H1 (cell line): ENCODE measurements at regions of chr5 and their contacts with region 1.

Region 1: DNA sequence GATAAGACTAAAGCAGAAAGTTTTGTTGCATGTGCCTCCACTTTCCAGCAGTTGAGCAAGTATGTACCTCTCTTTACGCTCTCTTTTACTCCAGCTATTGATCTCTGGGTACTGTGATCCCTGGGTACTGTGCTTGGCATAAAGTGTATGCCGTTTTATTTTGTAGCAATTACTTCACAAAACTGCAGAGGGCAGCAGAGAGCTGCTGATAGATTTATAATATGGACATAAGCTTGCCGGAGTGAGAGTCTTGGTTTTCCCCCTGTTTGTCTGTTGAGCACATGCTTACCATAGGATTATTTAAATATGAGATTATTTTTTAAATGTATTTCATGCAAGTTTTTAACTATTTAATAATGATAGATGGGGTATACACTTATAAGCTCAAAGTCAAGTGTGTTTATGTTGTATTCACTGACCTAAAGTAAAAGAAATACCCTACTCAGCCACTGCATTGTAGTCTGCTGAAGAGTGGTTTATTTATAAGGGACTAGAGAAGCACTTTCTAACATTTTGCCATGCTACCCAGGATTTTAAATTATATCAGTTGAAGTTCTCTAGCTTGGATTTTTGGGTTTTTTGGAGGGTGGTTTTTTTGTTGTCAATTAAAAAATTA is 13.0 kb downstream of the TTC1 start:
- DNase-seq: peak in 1 of 2 experiments; percentile 57
- H3K4me3 ChIP-seq: no peak overlapping the region
- H3K27ac ChIP-seq: no peak overlapping the region
- H3K4me1 ChIP-seq: no peaks in the 10 kb centered on the region
- H3K27me3 ChIP-seq: no peaks in the 10 kb centered on the region
- CTCF ChIP-seq: peak in 2 of 3 experiments; percentile 72 to 75; a peak in 3 of 4 replicates
- EP300 ChIP-seq: no peak
- POLR2A ChIP-seq: no peak
- RAD21 ChIP-seq: peak; percentile 83 to 90

Region 2: GRCh38 chr5:160008877-160009590 is 12.9 kb before region 1 on chr5 and contains the start of gene TTC1:
- CTCF ChIA-PET with region 1: interaction called, 20 read pairs
- POLR2A ChIA-PET with region 1: interaction called, 6 read pairs
- DNase-seq: peak; percentile 87 to 90
- H3K4me3 ChIP-seq: peak within 1 kb of the TSS; percentile 82 to 100 (median 98)
- H3K27ac ChIP-seq: peak within 1 kb of the TSS; percentile 93
- H3K4me1 ChIP-seq: peaks cover 0 to 4% (median 0%) of the 10 kb centered on the region in 4 experiments; a peak in 2 of 7 replicates
- H3K27me3 ChIP-seq: no peaks in the 10 kb centered on the region
- CTCF ChIP-seq: no peak
- EP300 ChIP-seq: no peak
- POLR2A ChIP-seq: peak; percentile 91 to 98
- RAD21 ChIP-seq: no peak
- total RNA-seq, gene TTC1: 63.9 TPM in 2 replicates

Region 3: DNA sequence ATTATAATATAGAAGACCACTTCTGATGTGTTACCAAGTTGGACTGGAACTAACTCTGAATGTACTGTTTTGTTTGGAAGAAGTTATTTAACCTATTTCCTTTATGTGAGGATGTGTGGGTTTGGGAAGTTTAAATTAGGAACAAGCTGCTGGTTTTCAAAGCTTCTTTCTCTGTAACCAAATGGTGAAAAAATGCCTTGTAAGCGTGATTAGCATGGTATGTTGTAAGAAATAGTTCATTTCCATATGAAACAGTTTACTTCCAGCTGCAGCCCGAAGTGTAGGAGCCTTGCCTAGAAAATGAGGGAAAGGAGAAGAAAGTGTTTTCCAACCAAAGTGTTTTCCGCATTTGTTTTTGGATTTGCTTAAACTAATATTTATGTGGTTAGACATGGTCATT is 23.0 kb after region 1 on chr5:
- CTCF ChIA-PET with region 1: interaction called, 12 read pairs
- POLR2A ChIA-PET with region 1: no interaction called
- DNase-seq: no peak
- H3K4me3 ChIP-seq: peak overlapping the region in 1 of 4 experiments; percentile 44; a peak in 2 of 8 replicates
- H3K27ac ChIP-seq: peak overlapping the region; percentile 61; the same call in 1 of the 2 replicates
- H3K4me1 ChIP-seq: peaks cover 5 to 20% (median 12%) of the 10 kb centered on the region in 4 experiments; a peak in 6 of 7 replicates
- H3K27me3 ChIP-seq: no peaks in the 10 kb centered on the region
- CTCF ChIP-seq: no peak
- EP300 ChIP-seq: no peak
- POLR2A ChIP-seq: no peak
- RAD21 ChIP-seq: no peak

Region 4: GRCh38 chr5:160071516-160071915 is 49.6 kb after region 1 on chr5:
- CTCF ChIA-PET with region 1: interaction called, 16 read pairs
- POLR2A ChIA-PET with region 1: interaction called, 4 read pairs
- DNase-seq: no peak
- H3K4me3 ChIP-seq: no peak overlapping the region
- H3K27ac ChIP-seq: no peak overlapping the region
- H3K4me1 ChIP-seq: peaks cover 0 to 4% (median 0%) of the 10 kb centered on the region in 4 experiments; a peak in 3 of 7 replicates
- H3K27me3 ChIP-seq: no peaks in the 10 kb centered on the region
- CTCF ChIP-seq: no peak
- EP300 ChIP-seq: no peak
- POLR2A ChIP-seq: no peak
- RAD21 ChIP-seq: no peak

Region 5: GRCh38 chr5:160390787-160391696 is 369.1 kb after region 1 on chr5:
- CTCF ChIA-PET with region 1: interaction called, 18 read pairs
- POLR2A ChIA-PET with region 1: no interaction called
- DNase-seq: no peak
- H3K4me3 ChIP-seq: no peak overlapping the region
- H3K27ac ChIP-seq: no peak overlapping the region
- H3K4me1 ChIP-seq: no peaks in the 10 kb centered on the region
- H3K27me3 ChIP-seq: peaks cover 0 to 1% (median 0%) of the 10 kb centered on the region in 4 experiments; a peak in 1 of 7 replicates
- CTCF ChIP-seq: peak in 2 of 3 experiments; percentile 13 to 29; a peak in 2 of 4 replicates
- EP300 ChIP-seq: no peak
- POLR2A ChIP-seq: no peak
- RAD21 ChIP-seq: peak; percentile 53 to 68